ENCODE measurements at regions of chr6 and their contacts with region 1.

Region 1: DNA sequence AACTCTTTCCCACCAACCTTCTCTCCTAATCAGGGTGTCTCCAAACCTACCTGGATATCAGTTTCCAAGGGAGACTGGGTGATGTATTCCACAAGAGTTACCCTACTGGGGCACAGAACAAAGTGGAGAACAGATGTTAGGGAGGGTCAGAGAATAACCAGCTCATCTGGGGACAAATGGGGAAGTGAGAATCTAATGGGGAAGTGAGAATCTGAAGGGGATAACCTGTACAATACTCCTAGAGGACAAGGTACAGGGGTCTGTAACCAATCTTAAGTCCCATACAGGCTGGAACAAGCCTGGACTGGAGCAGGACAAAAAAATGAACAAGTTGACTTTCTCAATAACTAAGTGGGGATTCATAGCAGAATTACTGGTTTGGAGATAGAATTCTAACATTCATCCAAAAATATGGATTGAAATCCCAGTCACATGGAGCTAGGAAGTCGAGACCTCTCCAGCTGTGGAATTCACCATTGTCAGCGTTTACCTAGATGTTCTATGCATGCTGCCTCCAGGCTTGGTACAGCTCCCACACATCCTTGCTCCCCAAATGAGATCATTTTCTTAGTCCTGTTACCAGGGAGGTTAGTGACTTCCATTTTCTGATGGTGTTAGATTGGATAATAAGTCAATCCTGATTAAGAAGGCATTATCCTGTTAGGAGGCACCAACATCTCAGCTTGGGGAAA is 214.8 kb upstream of the MOCS1 start:
- DNase-seq: peak; percentile 88
- ATAC-seq: peak; percentile 97
- H3K4me3 ChIP-seq: no peak overlapping the region
- H3K27ac ChIP-seq: peak overlapping the region; percentile 60
- H3K4me1 ChIP-seq: peaks cover 11% of the 10 kb centered on the region
- H3K27me3 ChIP-seq: no peaks in the 10 kb centered on the region
- CTCF ChIP-seq: no peak
- EP300 ChIP-seq: peak; percentile 94 to 100
- POLR2A ChIP-seq: no peak
- RAD21 ChIP-seq: no peak

Region 2: GRCh38 chr6:39517756-39518155 is 631.3 kb before region 1 on chr6:
- CTCF ChIA-PET with region 1: no interaction called
- POLR2A ChIA-PET with region 1: no interaction called
- RAD21 ChIA-PET with region 1: no interaction called
- SMC1A ChIA-PET with region 1: no interaction called
- in situ Hi-C with region 1: no loop called
- intact Hi-C with region 1: no loop called
- DNase-seq: no peak
- ATAC-seq: no peak
- H3K4me3 ChIP-seq: no peak overlapping the region
- H3K27ac ChIP-seq: no peak overlapping the region
- H3K4me1 ChIP-seq: no peaks in the 10 kb centered on the region
- H3K27me3 ChIP-seq: no peaks in the 10 kb centered on the region
- CTCF ChIP-seq: no peak
- EP300 ChIP-seq: no peak
- POLR2A ChIP-seq: no peak
- RAD21 ChIP-seq: no peak

Region 3: GRCh38 chr6:40054602-40055001 is 94.4 kb before region 1 on chr6:
- CTCF ChIA-PET with region 1: interaction called, 14 read pairs
- POLR2A ChIA-PET with region 1: interaction called, 3 read pairs
- RAD21 ChIA-PET with region 1: interaction called, 28 read pairs
- SMC1A ChIA-PET with region 1: interaction called, 39 read pairs
- in situ Hi-C with region 1: no loop called
- intact Hi-C with region 1: no loop called
- DNase-seq: no peak
- ATAC-seq: no peak
- H3K4me3 ChIP-seq: no peak overlapping the region
- H3K27ac ChIP-seq: no peak overlapping the region
- H3K4me1 ChIP-seq: no peaks in the 10 kb centered on the region
- H3K27me3 ChIP-seq: no peaks in the 10 kb centered on the region
- CTCF ChIP-seq: no peak
- EP300 ChIP-seq: no peak
- POLR2A ChIP-seq: no peak
- RAD21 ChIP-seq: no peak

Region 4: DNA sequence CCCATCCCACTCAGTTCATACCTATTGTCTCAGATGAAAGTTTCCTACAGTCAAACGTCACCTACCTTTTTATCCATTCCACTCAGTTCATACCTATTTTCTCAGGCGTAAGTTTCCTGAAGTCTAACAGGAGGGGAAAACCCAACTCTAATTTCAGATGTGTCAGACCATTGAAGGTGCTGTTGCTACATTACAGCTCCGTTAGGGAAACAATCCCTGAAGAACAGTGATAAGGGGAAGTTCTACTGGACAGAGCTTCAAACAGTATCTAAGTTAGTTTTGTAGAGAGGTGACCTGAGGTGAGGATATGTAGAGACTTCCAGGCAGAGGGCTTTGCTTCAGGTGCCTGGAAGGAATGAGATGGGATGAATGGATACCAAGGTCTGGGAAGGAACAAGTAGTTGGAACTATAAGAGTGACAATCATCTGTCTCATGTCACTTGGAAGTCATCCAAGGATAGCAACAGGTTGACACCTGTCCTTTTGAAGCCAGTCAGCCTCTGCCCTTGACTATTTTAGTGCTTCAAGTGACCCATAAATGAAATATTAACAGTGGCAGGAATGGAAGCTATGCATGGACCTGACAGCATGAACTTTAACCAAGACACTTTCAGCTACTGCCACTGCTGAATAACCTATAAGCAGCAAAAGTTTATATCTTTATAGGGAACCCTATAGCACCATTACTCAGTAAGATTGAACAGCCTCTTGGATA is 23.2 kb before region 1 on chr6:
- CTCF ChIA-PET with region 1: interaction called, 6 read pairs
- POLR2A ChIA-PET with region 1: interaction called, 4 read pairs
- RAD21 ChIA-PET with region 1: interaction called, 3 read pairs
- SMC1A ChIA-PET with region 1: interaction called, 29 read pairs
- in situ Hi-C with region 1: no loop called
- intact Hi-C with region 1: no loop called
- DNase-seq: no peak
- ATAC-seq: no peak
- H3K4me3 ChIP-seq: no peak overlapping the region
- H3K27ac ChIP-seq: no peak overlapping the region
- H3K4me1 ChIP-seq: no peaks in the 10 kb centered on the region
- H3K27me3 ChIP-seq: no peaks in the 10 kb centered on the region
- CTCF ChIP-seq: no peak
- EP300 ChIP-seq: no peak
- POLR2A ChIP-seq: no peak
- RAD21 ChIP-seq: no peak

Region 5: DNA sequence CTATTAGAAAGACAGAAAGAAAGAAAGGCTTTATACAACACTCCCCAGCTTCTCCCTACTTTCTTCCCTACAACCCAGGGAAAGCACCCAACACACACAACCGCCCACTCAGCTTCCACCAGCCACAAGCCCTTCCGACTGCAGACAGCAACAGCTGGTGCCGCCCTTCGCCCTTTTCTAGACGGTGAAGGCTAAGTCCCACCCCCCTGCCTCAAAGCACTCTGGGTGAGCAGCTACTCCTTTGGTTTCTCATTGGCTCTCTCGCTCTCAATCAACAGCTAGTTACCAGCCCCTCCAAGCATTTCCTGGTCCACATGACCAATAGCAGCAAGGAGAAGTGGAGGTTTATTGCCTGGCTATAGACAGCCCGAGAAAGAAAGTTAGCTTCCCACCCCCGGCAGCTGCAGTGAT is 15.3 kb after region 1 on chr6:
- CTCF ChIA-PET with region 1: interaction called, 14 read pairs
- POLR2A ChIA-PET with region 1: interaction called, 14 read pairs
- RAD21 ChIA-PET with region 1: interaction called, 9 read pairs
- SMC1A ChIA-PET with region 1: interaction called, 131 read pairs
- in situ Hi-C with region 1: no loop called
- intact Hi-C with region 1: no loop called
- DNase-seq: no peak
- ATAC-seq: no peak
- H3K4me3 ChIP-seq: no peak overlapping the region
- H3K27ac ChIP-seq: no peak overlapping the region
- H3K4me1 ChIP-seq: no peaks in the 10 kb centered on the region
- H3K27me3 ChIP-seq: no peaks in the 10 kb centered on the region
- CTCF ChIP-seq: no peak
- EP300 ChIP-seq: no peak
- POLR2A ChIP-seq: no peak
- RAD21 ChIP-seq: no peak

Region 6: DNA sequence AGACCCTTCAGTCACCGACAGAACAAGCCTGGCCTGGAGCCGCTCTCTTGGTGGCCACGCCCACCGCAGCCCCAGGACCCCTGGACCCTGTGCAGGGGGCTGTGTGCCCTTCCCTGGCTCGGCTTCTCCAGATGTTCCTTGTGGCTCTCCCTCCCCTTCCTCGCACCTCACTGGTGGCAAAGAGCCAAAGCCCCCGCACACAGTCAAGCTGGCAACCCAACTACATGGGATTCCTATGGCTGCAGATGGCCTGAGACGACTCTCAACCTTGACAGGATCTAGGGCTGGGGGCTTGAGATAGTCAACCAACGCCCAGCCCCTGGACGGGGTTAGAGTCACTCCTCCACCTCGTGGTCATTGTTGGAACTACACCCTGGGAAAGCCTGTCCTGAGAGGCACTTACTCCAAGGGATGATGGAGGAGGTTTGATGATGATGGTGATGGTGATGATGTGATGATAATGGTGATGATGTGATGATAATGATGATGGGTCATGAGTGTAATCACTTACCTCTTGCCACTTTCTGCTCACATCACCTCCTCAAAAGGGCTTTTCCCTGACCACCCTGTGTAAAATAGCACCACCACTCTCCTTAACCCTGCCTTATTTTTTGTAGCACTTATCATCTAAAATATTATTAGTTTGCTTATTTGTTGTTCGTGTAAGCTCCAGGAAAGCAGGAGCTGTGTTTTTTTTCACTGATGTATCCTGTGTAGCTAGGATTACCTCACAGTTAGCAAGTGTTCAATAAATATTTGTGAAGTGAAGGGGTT is 159.7 kb after region 1 on chr6:
- CTCF ChIA-PET with region 1: interaction called, 7 read pairs
- POLR2A ChIA-PET with region 1: no interaction called
- RAD21 ChIA-PET with region 1: interaction called, 7 read pairs
- SMC1A ChIA-PET with region 1: interaction called, 11 read pairs
- in situ Hi-C with region 1: no loop called
- intact Hi-C with region 1: no loop called
- DNase-seq: peak; percentile 11
- ATAC-seq: peak; percentile 94
- H3K4me3 ChIP-seq: no peak overlapping the region
- H3K27ac ChIP-seq: no peak overlapping the region
- H3K4me1 ChIP-seq: no peaks in the 10 kb centered on the region
- H3K27me3 ChIP-seq: peaks cover 3 to 9% of the 10 kb centered on the region in 2 experiments; a peak in 3 of 4 replicates
- CTCF ChIP-seq: peak; percentile 84 to 91 (median 89)
- EP300 ChIP-seq: no peak
- POLR2A ChIP-seq: no peak
- RAD21 ChIP-seq: peak; percentile 73